CD4-positive, alpha-beta memory T cell (primary cell): ENCODE measurements at regions of chr2 and their contacts with region 1.

Region 1: DNA sequence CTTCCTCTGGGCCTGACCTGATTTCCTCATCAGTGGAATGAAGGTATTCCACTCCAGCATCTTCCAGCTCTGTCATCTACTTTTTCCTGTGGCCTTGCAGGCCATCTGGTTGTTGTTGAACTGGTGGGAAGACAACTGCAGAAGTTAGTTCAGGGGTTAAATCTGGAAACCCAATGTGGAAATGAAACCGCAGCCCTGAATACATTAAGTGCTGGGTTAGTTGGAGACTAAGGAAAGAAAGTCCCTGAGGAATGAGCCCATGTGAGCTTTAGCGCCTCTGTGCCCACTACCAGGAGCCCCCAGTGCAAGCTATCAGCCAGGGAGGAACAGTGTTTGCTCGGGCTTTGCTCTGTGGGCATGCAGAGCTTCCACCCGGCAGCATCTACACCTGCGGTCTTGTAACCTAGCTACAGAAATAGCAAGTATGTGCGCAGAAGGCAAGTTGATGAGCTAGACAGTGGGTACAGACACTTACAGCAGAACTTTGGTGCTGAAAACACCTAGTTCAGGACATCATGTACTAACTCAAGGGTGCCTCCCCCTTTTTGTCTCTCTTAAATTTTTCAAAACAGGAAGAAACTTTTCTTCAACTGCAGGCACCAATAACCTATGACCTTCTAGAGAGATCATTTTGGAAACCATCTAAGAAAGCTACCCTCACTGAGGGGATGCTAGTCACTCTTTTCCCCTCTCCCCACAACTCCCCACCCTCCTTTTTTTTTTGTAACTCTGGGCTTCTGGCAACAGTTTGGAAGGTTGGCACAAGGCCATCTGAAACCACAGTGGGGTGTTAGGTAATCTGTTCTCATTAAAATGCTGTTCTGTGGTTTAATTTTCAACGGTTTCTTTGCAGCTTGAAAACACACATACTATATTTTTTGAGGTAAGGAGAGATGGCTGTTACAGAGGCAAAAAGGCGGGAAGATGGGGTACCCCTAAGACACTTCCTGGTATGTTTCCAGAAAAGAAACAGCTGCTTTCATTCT is 18.3 kb upstream of the CXCR4 start:
- DNase-seq: peak; percentile 93 to 96 (median 95)
- H3K4me3 ChIP-seq: peak overlapping the region in 1 of 2 donors; percentile 18
- H3K4me3 Mint-ChIP-seq: peak overlapping the region; percentile 70 to 92 (median 80)
- H3K27ac ChIP-seq: peak overlapping the region; percentile 95
- H3K27ac Mint-ChIP-seq: peak overlapping the region; percentile 96 to 100 (median 99)
- H3K4me1 ChIP-seq: peaks cover 98% of the 10 kb centered on the region
- H3K4me1 Mint-ChIP-seq: peaks cover 72 to 98% (median 89%) of the 10 kb centered on the region in 4 donors
- H3K27me3 ChIP-seq: no peaks in the 10 kb centered on the region
- H3K27me3 Mint-ChIP-seq: no peaks in the 10 kb centered on the region

Region 2: GRCh38 chr2:135052042-135052876 is 1084.0 kb before region 1 on chr2 and contains the start of gene RAB3GAP1:
- CTCF ChIA-PET with region 1: no interaction called
- POLR2A ChIA-PET with region 1: no interaction called
- intact Hi-C with region 1: loop called (anchors 5 kb)
- DNase-seq: peak; percentile 92 to 97 (median 94)
- H3K4me3 ChIP-seq: peak within 1 kb of the TSS; percentile 98 to 99
- H3K4me3 Mint-ChIP-seq: peak within 1 kb of the TSS; percentile 92 to 99 (median 98)
- H3K27ac ChIP-seq: peak within 1 kb of the TSS; percentile 97
- H3K27ac Mint-ChIP-seq: peak within 1 kb of the TSS; percentile 97 to 100 (median 100)
- H3K4me1 ChIP-seq: peaks cover 38% of the 10 kb centered on the region
- H3K4me1 Mint-ChIP-seq: peaks cover 23 to 48% (median 35%) of the 10 kb centered on the region in 4 donors
- H3K27me3 ChIP-seq: no peaks in the 10 kb centered on the region
- H3K27me3 Mint-ChIP-seq: no peaks in the 10 kb centered on the region
- total RNA-seq, gene RAB3GAP1: 45.1 to 46.7 TPM

Region 3: DNA sequence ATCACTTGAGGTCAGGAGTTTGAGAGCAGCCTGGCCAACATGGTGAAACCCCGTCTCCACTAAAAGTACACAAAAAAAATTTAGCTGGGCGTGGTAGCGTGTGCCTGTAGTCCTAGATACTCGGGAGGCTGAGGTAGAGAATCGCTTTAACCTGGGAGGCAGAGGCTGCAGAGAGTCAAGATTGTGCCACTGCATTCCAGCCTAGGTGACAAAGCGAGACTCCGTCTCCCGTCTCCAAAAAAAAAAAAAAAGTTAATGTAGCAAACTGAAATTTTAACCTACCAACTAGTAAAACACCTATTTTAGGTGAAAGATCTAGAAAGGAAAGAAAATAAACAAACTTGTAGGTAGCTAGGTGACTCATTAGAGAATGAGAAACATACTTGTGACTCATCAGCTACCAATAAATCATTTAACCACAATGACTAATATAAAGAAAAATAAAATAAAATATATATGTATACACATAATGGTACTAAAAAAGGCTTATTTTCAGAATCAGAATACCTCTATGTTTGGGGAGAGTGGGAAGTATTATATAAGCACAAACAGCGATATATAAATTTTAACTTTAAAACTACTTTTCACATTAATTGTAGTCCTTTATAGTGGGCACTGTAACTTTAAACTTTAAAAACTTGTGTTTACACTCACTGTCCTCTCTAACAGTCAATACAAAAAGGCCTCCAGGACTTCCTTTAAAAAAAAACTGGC is 187.4 kb before region 1 on chr2:
- CTCF ChIA-PET with region 1: no interaction called
- POLR2A ChIA-PET with region 1: interaction called, 11 read pairs
- intact Hi-C with region 1: no loop called
- DNase-seq: peak; percentile 45 to 68 (median 58)
- H3K4me3 ChIP-seq: no peak overlapping the region
- H3K4me3 Mint-ChIP-seq: peak overlapping the region; percentile 38 to 80 (median 68)
- H3K27ac ChIP-seq: peak overlapping the region; percentile 61
- H3K27ac Mint-ChIP-seq: peak overlapping the region; percentile 81 to 95 (median 92)
- H3K4me1 ChIP-seq: peaks cover 36% of the 10 kb centered on the region
- H3K4me1 Mint-ChIP-seq: peaks cover 36 to 72% (median 53%) of the 10 kb centered on the region in 4 donors
- H3K27me3 ChIP-seq: no peaks in the 10 kb centered on the region
- H3K27me3 Mint-ChIP-seq: no peaks in the 10 kb centered on the region

Region 4: GRCh38 chr2:136112317-136113208 is 23.7 kb before region 1 on chr2:
- CTCF ChIA-PET with region 1: interaction called, 6 read pairs
- POLR2A ChIA-PET with region 1: interaction called, 599 read pairs
- intact Hi-C with region 1: no loop called
- DNase-seq: peak in 1 of 5 donors; percentile 42
- H3K4me3 ChIP-seq: no peak overlapping the region
- H3K4me3 Mint-ChIP-seq: peak overlapping the region in 4 of 8 donors; percentile 36 to 88 (median 56)
- H3K27ac ChIP-seq: no peak overlapping the region
- H3K27ac Mint-ChIP-seq: peak overlapping the region in 4 of 7 donors; percentile 79 to 99 (median 92)
- H3K4me1 ChIP-seq: peaks cover 34% of the 10 kb centered on the region
- H3K4me1 Mint-ChIP-seq: peaks cover 31 to 50% (median 38%) of the 10 kb centered on the region in 4 donors
- H3K27me3 ChIP-seq: no peaks in the 10 kb centered on the region
- H3K27me3 Mint-ChIP-seq: no peaks in the 10 kb centered on the region

Region 5: DNA sequence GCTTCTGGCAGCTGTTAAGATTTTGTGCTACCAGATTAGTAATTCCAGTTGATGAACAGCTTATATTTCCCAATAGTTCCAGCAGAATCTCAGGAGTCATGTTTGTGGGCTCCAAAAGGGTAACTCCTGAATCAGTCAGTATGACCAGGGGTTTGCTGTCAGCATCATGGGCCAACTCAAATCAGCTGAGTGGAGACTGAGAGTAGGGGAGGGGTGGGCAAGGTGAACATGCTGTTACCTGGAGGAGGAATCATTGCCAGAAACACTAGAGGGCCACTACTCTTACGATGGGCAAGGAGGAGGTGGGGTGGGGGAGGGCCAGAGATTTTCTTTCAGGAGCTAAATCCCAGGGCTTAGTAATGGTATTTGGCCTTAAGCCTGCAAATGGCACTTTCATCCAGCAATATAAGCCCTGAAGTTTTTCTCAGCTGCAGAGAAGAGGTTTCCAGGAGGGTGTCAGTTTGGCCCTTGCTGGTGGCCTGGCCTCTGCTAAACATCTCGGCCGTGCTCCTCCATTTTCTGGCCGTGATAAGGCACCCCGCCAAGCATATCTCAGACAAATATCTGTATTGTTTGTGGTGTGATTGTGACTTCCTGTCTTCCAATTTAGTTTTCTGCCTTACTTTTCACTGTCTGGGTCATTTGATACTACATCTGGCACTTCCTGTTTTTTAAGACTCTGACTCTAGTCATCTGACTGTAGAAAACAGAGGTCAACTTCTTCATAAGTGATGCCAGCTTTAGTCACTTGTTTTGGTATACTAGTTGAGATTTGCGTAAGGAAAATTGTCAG is 102.3 kb after region 1 on chr2:
- CTCF ChIA-PET with region 1: interaction called, 22 read pairs
- POLR2A ChIA-PET with region 1: interaction called, 312 read pairs
- intact Hi-C with region 1: loop called (anchors 1 kb)
- DNase-seq: peak; percentile 72 to 83 (median 75)
- H3K4me3 ChIP-seq: no peak overlapping the region
- H3K4me3 Mint-ChIP-seq: peak overlapping the region; percentile 4 to 75 (median 40)
- H3K27ac ChIP-seq: peak overlapping the region; percentile 39
- H3K27ac Mint-ChIP-seq: peak overlapping the region; percentile 73 to 99 (median 95)
- H3K4me1 ChIP-seq: peaks cover 51% of the 10 kb centered on the region
- H3K4me1 Mint-ChIP-seq: peaks cover 40 to 62% (median 54%) of the 10 kb centered on the region in 4 donors
- H3K27me3 ChIP-seq: no peaks in the 10 kb centered on the region
- H3K27me3 Mint-ChIP-seq: no peaks in the 10 kb centered on the region

Region 6: GRCh38 chr2:136384531-136385303 is 248.5 kb after region 1 on chr2:
- CTCF ChIA-PET with region 1: interaction called, 6 read pairs
- POLR2A ChIA-PET with region 1: interaction called, 27 read pairs
- intact Hi-C with region 1: no loop called
- DNase-seq: peak; percentile 69 to 70 (median 70)
- H3K4me3 ChIP-seq: no peak overlapping the region
- H3K4me3 Mint-ChIP-seq: peak overlapping the region in 3 of 8 donors; percentile 3 to 54 (median 47)
- H3K27ac ChIP-seq: no peak overlapping the region
- H3K27ac Mint-ChIP-seq: peak overlapping the region; percentile 72 to 97 (median 89)
- H3K4me1 ChIP-seq: peaks cover 33% of the 10 kb centered on the region
- H3K4me1 Mint-ChIP-seq: peaks cover 34 to 38% (median 37%) of the 10 kb centered on the region in 4 donors
- H3K27me3 ChIP-seq: no peaks in the 10 kb centered on the region
- H3K27me3 Mint-ChIP-seq: no peaks in the 10 kb centered on the region